Activated CD4-positive, alpha-beta T cell treated with anti-CD3 and anti-CD28 coated beads for 36 hours (primary cell): ENCODE measurements at regions of chr17 and their contacts with region 1.

Region 1: DNA sequence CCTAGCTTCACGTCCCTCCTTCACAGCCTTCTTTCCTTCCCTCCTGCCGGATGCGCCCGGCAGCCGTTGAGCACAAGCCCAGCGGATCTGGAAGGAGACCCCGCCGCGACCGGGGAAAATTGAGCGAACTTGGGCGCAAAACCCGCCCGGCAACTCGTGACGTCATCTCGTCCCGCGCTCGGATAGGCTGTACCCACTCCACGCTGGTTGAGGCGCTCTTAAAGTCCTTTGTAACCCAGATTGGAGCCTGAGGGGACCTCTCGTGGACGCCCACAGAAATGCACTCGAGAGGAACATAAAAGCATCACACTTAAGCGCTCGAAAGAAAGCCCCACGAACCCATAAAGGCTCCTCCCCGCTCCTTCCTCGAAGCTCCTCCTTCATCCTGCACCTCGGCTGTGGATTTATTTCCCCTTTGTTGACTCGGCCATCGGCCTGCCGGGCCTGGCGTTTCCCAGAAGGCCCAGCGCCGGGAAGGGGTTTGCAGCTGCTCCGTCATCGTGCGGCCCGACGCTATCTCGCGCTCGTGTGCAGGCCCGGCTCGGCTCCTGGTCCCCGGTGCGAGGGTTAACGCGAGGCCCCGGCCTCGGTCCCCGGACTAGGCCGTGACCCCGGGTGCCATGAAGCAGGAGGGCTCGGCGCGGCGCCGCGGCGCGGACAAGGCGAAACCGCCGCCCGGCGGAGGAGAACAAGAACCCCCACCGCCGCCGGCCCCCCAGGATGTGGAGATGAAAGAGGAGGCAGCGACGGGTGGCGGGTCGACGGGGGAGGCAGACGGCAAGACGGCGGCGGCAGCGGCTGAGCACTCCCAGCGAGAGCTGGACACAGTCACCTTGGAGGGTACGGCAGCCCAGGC is at the start of gene PSMD3:
- DNase-seq: peak; percentile 99
- ATAC-seq: peak; percentile 98
- H3K4me3 Mint-ChIP-seq: peak within 1 kb of the TSS; percentile 94
- H3K27ac Mint-ChIP-seq: peak within 1 kb of the TSS; percentile 90
- H3K4me1 Mint-ChIP-seq: peaks cover 31% of the 10 kb centered on the region
- H3K27me3 Mint-ChIP-seq: peaks cover 4% of the 10 kb centered on the region
- total RNA-seq, gene PSMD3: 141 to 146 TPM

Region 2: GRCh38 chr17:39461113-39461925 is 519.3 kb before region 1 on chr17 and contains the start of gene CDK12:
- CTCF ChIA-PET with region 1: no interaction called
- POLR2A ChIA-PET with region 1: no interaction called
- intact Hi-C with region 1: loop called (anchors 1 to 10 kb)
- DNase-seq: peak; percentile 97
- ATAC-seq: peak; percentile 91
- H3K4me3 Mint-ChIP-seq: peak within 1 kb of the TSS; percentile 91
- H3K27ac Mint-ChIP-seq: peak within 1 kb of the TSS; percentile 94
- H3K4me1 Mint-ChIP-seq: peaks cover 22% of the 10 kb centered on the region
- H3K27me3 Mint-ChIP-seq: no peaks in the 10 kb centered on the region
- total RNA-seq, gene CDK12: 65.9 to 83.3 TPM

Region 3: DNA sequence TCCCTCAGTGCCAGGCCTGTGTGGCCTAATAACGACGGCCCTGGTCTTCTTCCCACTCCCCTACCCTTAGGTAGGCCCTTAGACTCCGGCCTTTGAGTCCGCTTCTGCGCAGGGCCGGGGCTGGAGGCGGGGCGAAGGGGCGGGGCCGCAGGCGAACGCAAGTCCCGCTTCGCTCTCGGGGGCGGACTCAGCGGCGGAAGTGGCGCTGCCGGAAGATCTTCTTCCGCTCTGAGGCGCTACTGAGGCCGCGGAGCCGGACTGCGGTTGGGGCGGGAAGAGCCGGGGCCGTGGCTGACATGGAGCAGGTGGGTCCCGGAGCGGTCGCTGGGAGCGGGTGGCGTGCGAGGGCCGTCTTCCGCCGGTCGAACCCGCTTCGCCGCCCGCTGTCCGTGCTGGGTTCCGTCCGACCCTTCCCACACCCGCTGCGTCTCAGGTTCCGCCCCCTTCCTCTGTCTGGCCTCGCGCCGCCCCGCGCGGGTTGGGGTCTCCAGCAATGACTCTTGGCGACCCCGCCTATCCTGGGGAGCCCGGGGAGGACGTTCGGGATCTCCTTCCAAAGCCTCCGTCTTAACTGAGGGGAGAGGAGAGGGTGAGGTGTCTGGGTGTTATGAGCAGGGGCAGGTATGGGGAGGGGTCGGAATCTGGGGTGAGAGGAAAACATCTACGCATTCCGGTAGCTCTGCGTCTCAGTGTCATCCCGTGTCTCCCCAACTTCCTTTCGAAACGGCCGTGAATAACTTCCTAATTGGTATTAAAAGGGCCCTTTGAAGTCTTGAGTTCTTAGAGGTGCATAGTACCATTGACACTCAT is 343.4 kb before region 1 on chr17 and contains the start of gene STARD3:
- CTCF ChIA-PET with region 1: interaction called, 4 read pairs
- POLR2A ChIA-PET with region 1: no interaction called
- intact Hi-C with region 1: loop called in 1 of 2 experiments (anchors 1 kb)
- DNase-seq: peak; percentile 96
- ATAC-seq: peak; percentile 87
- H3K4me3 Mint-ChIP-seq: peak within 1 kb of the TSS; percentile 86
- H3K27ac Mint-ChIP-seq: peak within 1 kb of the TSS; percentile 83
- H3K4me1 Mint-ChIP-seq: peaks cover 51% of the 10 kb centered on the region
- H3K27me3 Mint-ChIP-seq: no peaks in the 10 kb centered on the region
- total RNA-seq, gene STARD3: 46.8 to 77.9 TPM

Region 4: DNA sequence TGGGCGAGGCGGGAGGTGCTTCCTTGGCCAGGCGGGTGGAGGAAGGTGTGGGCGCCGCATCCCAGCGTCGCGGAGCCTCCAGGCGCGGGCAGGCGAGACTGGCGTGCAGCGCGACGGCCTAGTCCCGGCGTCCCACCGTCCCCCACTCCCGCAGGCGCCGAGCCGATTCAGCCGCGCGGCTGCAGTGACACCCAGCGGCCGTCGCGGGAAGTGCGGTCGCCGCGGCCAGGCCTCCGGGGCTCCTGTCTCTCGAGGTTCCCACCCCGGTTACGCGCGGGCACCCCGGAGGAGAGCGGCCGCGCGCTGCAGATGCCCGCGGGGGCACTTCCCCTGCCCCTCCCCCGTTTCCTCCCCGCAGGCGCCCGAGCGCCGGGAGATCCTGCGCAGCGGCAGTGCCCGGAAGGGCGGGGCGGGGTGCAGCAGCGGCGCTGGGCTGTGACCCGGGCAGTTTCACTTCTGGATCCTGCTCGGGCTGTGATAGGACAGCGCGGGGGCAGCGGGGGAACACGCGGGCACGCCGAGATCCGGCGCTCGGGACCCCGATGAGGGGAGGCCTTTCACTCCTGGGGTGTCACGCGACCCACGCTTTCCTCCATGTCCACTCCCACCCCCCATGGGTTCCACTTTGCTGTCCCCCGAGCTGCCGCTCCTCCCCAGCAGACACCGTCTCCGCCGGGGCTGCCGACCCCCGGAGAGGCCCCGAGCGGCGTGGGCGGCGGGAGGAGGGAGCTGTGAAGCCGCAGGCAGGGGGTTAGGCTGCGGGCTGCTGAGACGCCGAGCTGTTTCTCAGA is 226.2 kb before region 1 on chr17:
- CTCF ChIA-PET with region 1: no interaction called
- POLR2A ChIA-PET with region 1: no interaction called
- intact Hi-C with region 1: loop called (anchors 1 kb)
- DNase-seq: peak; percentile 98
- ATAC-seq: peak; percentile 86
- H3K4me3 Mint-ChIP-seq: peak overlapping the region; percentile 77
- H3K27ac Mint-ChIP-seq: peak overlapping the region; percentile 76
- H3K4me1 Mint-ChIP-seq: peaks cover 61% of the 10 kb centered on the region
- H3K27me3 Mint-ChIP-seq: no peaks in the 10 kb centered on the region

Region 5: DNA sequence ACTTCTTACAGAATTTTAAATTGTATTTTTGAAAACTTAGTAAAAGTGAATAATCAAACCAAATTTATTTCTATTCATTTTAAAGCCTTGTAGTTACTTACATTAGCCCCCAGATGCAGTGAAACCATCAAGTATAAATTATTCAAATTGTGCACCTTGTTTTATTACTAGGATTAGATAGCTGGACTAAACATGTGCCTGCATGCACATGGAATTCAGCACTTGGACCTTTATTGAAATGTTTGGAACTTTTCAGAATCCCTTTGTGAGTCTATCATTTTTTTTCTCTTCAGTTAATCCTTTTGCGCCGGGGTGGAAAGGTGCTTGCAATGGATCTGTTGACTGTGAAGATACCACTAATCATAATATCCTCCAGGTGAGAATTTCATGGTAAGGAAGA is 107.8 kb before region 1 on chr17:
- CTCF ChIA-PET with region 1: interaction called, 7 read pairs
- POLR2A ChIA-PET with region 1: no interaction called
- intact Hi-C with region 1: loop called (anchors 1 kb)
- DNase-seq: no peak
- ATAC-seq: no peak
- H3K4me3 Mint-ChIP-seq: no peak overlapping the region
- H3K27ac Mint-ChIP-seq: no peak overlapping the region
- H3K4me1 Mint-ChIP-seq: peaks cover 17% of the 10 kb centered on the region
- H3K27me3 Mint-ChIP-seq: no peaks in the 10 kb centered on the region

Region 6: GRCh38 chr17:39952680-39953470 is 27.7 kb before region 1 on chr17:
- CTCF ChIA-PET with region 1: interaction called, 87 read pairs
- POLR2A ChIA-PET with region 1: interaction called, 3 read pairs
- intact Hi-C with region 1: loop called in 1 of 2 experiments (anchors 1 kb)
- DNase-seq: peak; percentile 98
- ATAC-seq: peak; percentile 87
- H3K4me3 Mint-ChIP-seq: peak overlapping the region; percentile 73
- H3K27ac Mint-ChIP-seq: peak overlapping the region; percentile 69
- H3K4me1 Mint-ChIP-seq: peaks cover 12% of the 10 kb centered on the region
- H3K27me3 Mint-ChIP-seq: no peaks in the 10 kb centered on the region

Region 7: DNA sequence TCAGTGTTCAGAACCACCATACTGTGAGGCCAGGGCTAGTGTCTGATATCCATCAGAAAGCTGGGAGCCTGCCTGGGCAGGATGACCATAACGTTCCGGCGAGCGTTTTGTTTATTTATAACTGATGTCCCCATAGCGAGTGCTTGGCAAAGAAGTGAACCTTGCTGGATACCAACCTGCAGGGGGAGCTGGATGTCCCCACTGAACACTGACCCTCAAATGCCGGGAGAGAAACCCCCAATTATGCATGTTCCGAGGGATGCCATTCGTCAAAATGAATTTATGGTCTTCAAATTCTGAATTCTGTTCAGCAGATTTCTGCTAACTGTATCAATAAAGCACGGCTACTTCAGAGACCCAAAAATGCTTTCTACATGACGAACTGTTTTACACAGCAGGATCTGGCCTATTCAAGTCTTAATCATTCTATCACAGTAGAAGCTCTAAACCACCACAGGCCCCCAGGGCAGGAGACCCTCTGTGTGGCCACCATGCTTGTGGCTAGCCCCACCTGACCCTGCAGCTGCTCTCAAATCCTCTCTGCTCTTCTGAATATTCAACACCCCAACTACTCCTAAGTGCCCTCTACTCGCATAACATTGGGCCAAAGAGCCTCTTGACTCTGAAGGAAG is 58.4 kb after region 1 on chr17:
- CTCF ChIA-PET with region 1: no interaction called
- POLR2A ChIA-PET with region 1: no interaction called
- intact Hi-C with region 1: no loop called
- DNase-seq: no peak
- ATAC-seq: no peak
- H3K4me3 Mint-ChIP-seq: no peak overlapping the region
- H3K27ac Mint-ChIP-seq: no peak overlapping the region
- H3K4me1 Mint-ChIP-seq: no peaks in the 10 kb centered on the region
- H3K27me3 Mint-ChIP-seq: no peaks in the 10 kb centered on the region

Region 8: GRCh38 chr17:40219073-40219860 is 238.7 kb after region 1 on chr17 and contains the start of gene WIPF2:
- CTCF ChIA-PET with region 1: no interaction called
- POLR2A ChIA-PET with region 1: no interaction called
- intact Hi-C with region 1: loop called in 1 of 2 experiments (anchors 1 kb)
- DNase-seq: peak; percentile 98
- ATAC-seq: peak; percentile 96
- H3K4me3 Mint-ChIP-seq: peak within 1 kb of the TSS; percentile 89
- H3K27ac Mint-ChIP-seq: peak within 1 kb of the TSS; percentile 100
- H3K4me1 Mint-ChIP-seq: peaks cover 26% of the 10 kb centered on the region
- H3K27me3 Mint-ChIP-seq: no peaks in the 10 kb centered on the region
- total RNA-seq, gene WIPF2: 18.4 to 23.6 TPM